H1 (cell line): ENCODE measurements at regions of chr17 and their contacts with region 1.

Region 1: GRCh38 chr17:16521070-16521727 is 29.2 kb upstream of the LRRC75A start:
- DNase-seq: peak; percentile 39 to 69
- H3K4me3 ChIP-seq: no peak overlapping the region
- H3K27ac ChIP-seq: no peak overlapping the region
- H3K4me1 ChIP-seq: peaks cover 0 to 3% (median 0%) of the 10 kb centered on the region in 4 experiments; a peak in 3 of 7 replicates
- H3K27me3 ChIP-seq: peaks cover 0 to 2% (median 0%) of the 10 kb centered on the region in 4 experiments; a peak in 2 of 7 replicates
- CTCF ChIP-seq: peak; percentile 78 to 97 (median 93)
- EP300 ChIP-seq: no peak
- POLR2A ChIP-seq: no peak
- RAD21 ChIP-seq: peak; percentile 97

Region 2: DNA sequence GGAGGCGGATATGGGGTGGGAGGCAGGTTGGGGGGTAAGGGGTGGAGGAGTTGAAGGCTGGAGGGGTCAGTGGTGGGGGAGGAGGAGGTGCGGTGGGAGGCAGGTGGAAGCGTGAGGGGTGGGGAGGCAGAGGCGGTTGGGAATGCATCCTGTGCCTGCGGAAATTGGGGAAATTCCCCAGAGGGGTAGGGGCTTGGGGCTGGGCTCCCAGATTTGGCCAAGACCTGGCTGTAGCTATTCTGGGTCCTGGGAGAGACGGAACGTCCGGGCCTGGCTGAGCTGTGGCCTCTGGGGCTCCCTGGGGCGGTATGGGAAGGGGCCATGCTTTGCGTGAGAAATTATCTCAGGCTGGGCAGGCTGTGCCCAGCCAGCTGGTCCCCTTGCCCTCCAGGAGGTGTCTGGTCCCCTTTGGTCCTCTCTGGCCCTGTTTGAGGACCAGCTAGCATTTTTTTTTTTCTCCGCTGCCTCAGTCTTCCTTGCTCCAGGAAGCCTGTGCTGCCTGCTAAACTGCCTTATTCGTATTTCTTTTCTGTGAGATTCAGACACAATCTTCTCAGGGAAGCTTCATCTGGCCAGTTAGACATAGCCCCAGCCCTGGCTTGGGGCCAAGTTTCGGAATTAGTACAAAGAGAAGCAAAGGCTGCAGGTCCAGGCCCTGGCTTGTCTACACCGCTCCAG is 113.1 kb before region 1 on chr17:
- CTCF ChIA-PET with region 1: no interaction called
- POLR2A ChIA-PET with region 1: no interaction called
- DNase-seq: peak in 1 of 2 experiments; percentile 69
- H3K4me3 ChIP-seq: peak overlapping the region in 2 of 4 experiments; percentile 23 to 52; a peak in 4 of 8 replicates
- H3K27ac ChIP-seq: peak overlapping the region; percentile 68
- H3K4me1 ChIP-seq: peaks cover 4 to 7% (median 4%) of the 10 kb centered on the region in 4 experiments; a peak in 4 of 7 replicates
- H3K27me3 ChIP-seq: no peaks in the 10 kb centered on the region
- CTCF ChIP-seq: no peak
- EP300 ChIP-seq: no peak
- POLR2A ChIP-seq: no peak
- RAD21 ChIP-seq: no peak

Region 3: DNA sequence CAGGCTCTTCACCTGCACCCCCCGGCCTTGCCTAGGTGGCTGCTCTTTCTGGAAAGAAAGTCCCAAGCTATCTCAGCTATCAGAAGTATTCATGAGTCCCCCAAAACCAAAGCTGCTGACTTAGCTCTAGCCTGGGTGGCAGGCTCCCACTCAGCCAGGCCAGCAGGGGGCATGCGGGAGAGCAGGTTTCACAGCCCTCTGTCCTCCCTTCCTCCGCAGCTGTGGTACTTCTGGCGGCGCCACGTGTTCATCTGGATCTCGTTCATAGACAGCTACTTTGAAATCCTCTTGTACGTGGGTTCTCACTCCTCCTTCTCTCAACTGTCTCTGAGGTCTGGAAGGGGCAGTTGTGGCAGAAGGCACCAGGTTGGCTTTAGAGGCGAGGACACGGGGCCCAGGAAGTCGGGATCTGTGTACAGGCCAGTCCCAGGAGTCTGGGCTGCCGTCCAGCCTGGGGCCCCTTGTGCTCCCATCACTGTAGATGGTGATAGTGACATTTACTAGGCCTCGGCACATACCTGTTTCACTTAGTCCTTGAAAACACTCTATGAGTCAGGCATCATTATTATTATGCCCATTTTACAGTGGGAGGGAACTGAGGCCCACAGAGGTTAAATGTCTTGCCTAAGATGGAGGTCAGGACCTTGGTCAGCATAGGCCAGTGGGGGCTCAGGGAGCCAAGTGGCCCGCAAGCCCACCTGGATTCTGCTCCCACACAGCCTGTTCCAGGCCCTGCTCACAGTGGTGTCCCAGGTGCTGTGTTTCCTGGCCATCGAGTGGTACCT is 92.9 kb before region 1 on chr17:
- CTCF ChIA-PET with region 1: interaction called, 10 read pairs
- POLR2A ChIA-PET with region 1: no interaction called
- DNase-seq: peak in 1 of 2 experiments; percentile 44
- H3K4me3 ChIP-seq: no peak overlapping the region
- H3K27ac ChIP-seq: no peak overlapping the region
- H3K4me1 ChIP-seq: no peaks in the 10 kb centered on the region
- H3K27me3 ChIP-seq: no peaks in the 10 kb centered on the region; a peak in 1 of 7 replicates
- CTCF ChIP-seq: peak; percentile 62 to 82 (median 81)
- EP300 ChIP-seq: no peak
- POLR2A ChIP-seq: no peak
- RAD21 ChIP-seq: peak; percentile 40 to 52

Region 4: DNA sequence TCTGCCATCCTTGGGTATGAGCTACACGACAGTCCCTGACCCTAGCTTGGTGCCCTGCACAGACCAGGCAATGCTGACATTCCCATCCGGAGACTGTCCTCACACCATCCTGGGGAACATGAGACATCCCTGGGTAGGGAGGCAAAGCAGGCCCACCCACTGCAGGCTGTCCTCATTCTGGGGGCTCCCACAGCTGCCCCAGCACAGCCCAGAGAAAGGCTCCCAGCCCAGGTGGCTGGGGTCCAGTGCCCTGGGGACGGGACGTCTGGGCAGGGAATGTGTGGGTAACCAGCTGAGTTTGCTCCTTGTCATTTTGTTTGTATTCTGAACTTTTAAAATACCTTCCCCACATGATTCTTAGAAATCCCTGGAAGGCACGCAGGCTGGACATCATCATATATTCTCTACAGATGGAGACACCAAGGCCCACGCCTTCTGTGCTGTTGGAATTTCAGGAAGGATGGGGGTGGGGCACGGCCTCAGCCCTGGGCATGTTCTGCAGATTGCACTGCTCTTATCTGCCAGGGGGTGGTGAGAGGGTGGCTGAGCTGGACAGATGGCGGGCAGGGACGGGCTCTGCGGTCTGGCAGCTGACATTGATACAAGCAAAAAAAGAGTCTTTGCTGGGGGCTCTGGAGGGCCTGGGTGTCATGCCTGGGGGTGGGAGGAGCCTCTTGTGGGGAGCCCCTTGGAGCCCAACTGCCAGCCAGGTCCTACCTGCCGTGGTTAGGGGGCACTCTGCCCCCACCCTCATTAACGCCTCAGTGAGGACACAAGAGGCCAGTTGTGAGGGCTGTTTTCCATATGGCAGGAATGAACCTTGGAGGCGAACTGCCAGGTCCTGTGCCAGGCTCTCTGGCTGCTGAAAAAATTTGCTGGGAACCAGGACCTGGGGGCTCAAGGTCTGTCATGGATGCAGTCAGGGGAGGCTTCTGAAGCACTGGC is 57.6 kb before region 1 on chr17:
- CTCF ChIA-PET with region 1: interaction called, 941 read pairs
- POLR2A ChIA-PET with region 1: no interaction called
- DNase-seq: no peak
- H3K4me3 ChIP-seq: no peak overlapping the region
- H3K27ac ChIP-seq: no peak overlapping the region
- H3K4me1 ChIP-seq: peaks cover 6 to 26% (median 10%) of the 10 kb centered on the region in 4 experiments
- H3K27me3 ChIP-seq: no peaks in the 10 kb centered on the region
- CTCF ChIP-seq: peak; percentile 40 to 60 (median 43); a peak in 3 of 4 replicates
- EP300 ChIP-seq: no peak
- POLR2A ChIP-seq: no peak
- RAD21 ChIP-seq: peak; percentile 24 to 52; a peak in 2 of 4 replicates

Region 5: DNA sequence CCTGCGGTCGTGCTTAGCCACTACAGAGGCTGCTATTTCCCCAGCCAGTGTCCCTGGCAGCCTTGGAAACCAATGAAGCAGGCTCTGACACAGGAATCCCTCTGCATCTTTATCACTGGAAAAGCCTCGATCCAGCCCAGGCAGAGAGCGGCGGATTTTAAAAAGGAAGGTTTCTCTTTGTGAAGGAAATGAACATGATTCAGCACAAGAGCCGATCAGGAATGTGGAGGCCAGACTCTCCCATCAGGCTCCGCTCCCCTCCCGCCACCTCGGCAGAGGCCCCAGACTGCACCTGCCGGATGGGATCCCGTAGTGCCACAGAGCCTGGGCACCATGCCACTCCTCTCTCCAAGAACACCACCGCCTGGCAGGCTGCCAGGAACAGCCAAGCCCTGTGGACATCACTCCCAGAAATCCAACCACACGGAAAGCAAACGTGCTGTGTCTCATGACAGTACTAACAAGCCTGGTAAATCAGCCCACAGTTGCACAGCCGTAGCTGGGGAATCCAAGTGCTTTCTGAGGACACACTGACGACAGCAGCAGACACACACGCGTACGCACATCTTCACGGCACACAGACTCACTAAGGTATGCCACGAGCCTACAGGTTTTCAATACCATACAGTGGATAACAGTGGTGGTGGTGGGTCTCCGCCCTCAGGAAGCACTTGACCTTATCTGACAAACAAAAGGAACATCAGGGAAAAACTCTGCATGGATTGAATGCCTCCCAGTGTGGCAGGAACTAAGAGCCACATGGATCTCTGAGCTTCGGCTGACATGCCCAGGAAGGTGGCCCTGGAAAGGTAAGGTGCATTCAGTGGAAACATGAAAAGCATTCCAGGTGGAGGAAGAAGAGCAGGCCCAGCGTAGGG is 34.6 kb before region 1 on chr17:
- CTCF ChIA-PET with region 1: interaction called, 41 read pairs
- POLR2A ChIA-PET with region 1: interaction called, 3 read pairs
- DNase-seq: peak in 1 of 2 experiments; percentile 65
- H3K4me3 ChIP-seq: no peak overlapping the region
- H3K27ac ChIP-seq: peak overlapping the region; percentile 52; the same call in 1 of the 2 replicates
- H3K4me1 ChIP-seq: peaks cover 20 to 64% (median 52%) of the 10 kb centered on the region in 4 experiments
- H3K27me3 ChIP-seq: peaks cover 0 to 14% (median 8%) of the 10 kb centered on the region in 4 experiments; a peak in 2 of 7 replicates
- CTCF ChIP-seq: no peak
- EP300 ChIP-seq: no peak
- POLR2A ChIP-seq: 0 out of 3 replicates have a peak, but pooled peaks of 1 of the 2 experiments have one; percentile 22
- RAD21 ChIP-seq: no peak

Region 6: DNA sequence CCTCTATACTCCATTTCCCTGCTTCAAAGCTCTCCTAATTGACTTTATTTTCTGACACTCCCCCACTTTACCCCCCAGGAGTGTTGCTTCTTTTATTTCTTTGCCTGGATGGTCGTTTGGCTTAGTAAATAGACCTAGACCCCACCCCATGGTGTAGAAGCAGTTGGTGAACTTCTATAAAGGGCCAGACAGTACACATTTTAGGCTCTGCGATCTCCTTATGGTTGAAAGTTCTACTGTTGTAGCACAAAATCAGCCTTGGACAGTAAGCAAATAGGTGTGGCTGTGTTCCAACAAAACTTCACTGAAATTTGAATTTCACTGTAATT is 15.9 kb after region 1 on chr17:
- CTCF ChIA-PET with region 1: interaction called, 48 read pairs
- POLR2A ChIA-PET with region 1: interaction called, 3 read pairs
- DNase-seq: no peak
- H3K4me3 ChIP-seq: no peak overlapping the region
- H3K27ac ChIP-seq: no peak overlapping the region
- H3K4me1 ChIP-seq: peaks cover 0 to 3% (median 0%) of the 10 kb centered on the region in 4 experiments; a peak in 2 of 7 replicates
- H3K27me3 ChIP-seq: no peaks in the 10 kb centered on the region
- CTCF ChIP-seq: no peak
- EP300 ChIP-seq: no peak
- POLR2A ChIP-seq: no peak
- RAD21 ChIP-seq: no peak